Lower leg skin (tissue), 4 donors: ENCODE measurements at regions of chr3 and their contacts with region 1.

Region 1: DNA sequence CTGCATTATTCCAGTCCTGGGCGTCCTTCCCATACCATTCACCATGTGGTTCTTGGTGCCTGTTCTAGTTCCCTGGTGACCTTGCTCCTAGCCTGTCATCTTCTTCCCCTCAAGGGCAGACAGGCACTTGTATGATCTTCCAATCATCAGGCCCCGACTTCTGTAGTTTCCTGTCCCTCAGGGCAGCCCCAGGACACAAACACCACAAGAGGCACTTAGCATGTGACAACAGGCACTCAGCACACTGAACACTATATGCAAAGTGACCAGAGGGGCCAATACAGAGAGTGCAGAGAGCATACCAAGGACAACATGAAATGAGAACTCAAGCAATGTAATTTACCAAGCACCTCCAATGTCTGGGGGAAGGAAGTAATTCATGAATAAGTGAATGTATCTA is 17.9 kb downstream of the TMEM40 start:
- DNase-seq: no peak
- H3K4me3 ChIP-seq: no peak overlapping the region
- CTCF ChIP-seq: no peak
- POLR2A ChIP-seq: no peak

Region 2: DNA sequence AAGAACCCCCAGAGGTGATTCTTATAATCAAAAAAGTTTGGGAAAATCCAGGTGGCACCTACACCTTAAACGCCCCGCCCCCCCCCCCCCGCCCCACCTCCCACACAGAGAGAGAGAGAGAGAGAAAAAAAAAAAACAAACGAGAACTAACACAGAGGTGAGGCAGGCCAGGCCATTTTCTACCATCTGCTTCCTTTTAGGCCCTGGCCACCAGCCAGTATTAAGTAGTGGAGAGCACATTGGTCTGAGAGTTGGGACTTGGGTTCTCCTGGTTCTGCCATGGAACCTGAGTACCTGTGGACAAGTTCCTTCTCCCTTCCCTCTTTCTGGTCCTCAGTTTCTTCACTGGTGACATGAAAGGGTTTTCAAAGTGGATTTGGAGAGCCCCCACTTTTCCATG is 1864.5 kb before region 1 on chr3:
- intact Hi-C with region 1: loop called (anchors 10 kb)
- DNase-seq: no peak
- H3K4me3 ChIP-seq: no peak overlapping the region
- CTCF ChIP-seq: no peak
- POLR2A ChIP-seq: no peak